ENCODE measurements at regions of chr7 and their contacts with region 1.

Region 1: DNA sequence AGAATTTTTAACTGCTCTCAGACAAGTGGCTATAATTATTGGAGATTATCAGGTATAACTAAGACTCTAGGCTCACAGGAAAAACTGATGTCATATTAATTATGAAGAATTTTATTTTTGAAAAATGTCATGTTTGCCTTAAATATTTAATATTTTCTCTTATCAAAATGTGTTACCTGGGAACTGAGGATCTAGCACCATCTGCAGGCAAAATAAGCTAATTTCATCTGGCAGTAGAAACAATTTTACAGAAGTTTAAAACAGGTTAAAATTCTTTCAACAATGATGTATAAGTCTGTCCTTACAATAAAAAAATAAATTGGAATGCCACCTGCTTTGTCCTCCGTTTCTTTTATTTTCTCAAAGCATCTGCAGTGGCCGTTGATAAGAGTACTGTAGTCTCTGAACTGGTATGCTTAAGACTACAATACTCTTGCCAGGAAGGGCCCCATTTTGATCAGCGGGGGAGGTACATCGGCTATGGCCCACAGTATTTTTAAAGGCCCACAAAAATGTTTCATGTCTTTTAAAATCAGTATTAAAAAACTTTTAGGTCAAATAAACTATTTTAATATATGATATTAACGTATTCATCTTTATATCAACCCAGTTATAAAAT is 81.3 kb downstream of the VWDE start:
- H3K4me3 Mint-ChIP-seq: no peak overlapping the region
- H3K27ac Mint-ChIP-seq: no peak overlapping the region
- H3K4me1 Mint-ChIP-seq: no peaks in the 10 kb centered on the region
- H3K27me3 Mint-ChIP-seq: peaks cover 4% of the 10 kb centered on the region

Region 2: GRCh38 chr7:11831736-11832495 is 490.5 kb before region 1 on chr7 and contains the start of gene THSD7A:
- intact Hi-C with region 1: loop called (anchors 10 kb)
- H3K4me3 Mint-ChIP-seq: peak within 1 kb of the TSS; percentile 72
- H3K27ac Mint-ChIP-seq: no peak within 1 kb of the TSS
- H3K4me1 Mint-ChIP-seq: peaks cover 15% of the 10 kb centered on the region
- H3K27me3 Mint-ChIP-seq: peaks cover 29% of the 10 kb centered on the region

Region 3: GRCh38 chr7:12067141-12067831 is 255.1 kb before region 1 on chr7:
- intact Hi-C with region 1: loop called (anchors 2 kb)
- H3K4me3 Mint-ChIP-seq: no peak overlapping the region
- H3K27ac Mint-ChIP-seq: peak overlapping the region; percentile 51
- H3K4me1 Mint-ChIP-seq: peaks cover 20% of the 10 kb centered on the region
- H3K27me3 Mint-ChIP-seq: no peaks in the 10 kb centered on the region

Region 4: DNA sequence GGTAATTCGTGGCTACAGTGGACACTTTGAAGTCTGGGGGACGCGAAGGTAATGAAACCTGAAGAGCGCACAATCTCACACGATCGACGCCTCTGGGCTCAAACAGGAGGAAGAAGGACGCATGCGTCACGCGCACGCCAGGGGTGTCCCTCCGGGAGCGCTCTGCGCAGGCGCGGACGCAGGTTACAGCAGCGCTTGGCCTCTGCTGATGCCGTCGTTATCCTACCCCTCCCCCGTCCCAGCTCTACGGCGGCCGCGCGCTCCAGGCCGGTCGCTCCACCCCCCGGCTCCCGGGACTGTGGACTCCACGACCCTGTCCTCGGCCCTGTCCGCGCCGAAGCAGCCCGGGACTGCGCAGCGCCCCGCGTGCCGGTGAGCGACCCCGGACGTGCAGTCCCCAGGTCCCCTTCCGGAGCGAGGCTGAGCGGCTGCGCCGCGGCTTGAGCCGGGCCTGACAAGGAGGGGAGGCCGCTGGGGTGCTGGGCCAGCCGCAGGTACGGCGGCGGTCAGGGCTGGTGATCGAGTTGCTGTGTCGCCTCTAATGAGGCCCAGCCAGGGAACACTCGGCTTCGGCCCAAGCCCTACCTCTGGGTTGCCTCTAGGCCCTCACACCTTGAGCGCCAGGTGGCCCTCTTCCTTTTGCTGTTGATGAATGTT is 111.2 kb before region 1 on chr7 and contains the start of gene TMEM106B:
- intact Hi-C with region 1: no loop called
- H3K4me3 Mint-ChIP-seq: peak within 1 kb of the TSS; percentile 84
- H3K27ac Mint-ChIP-seq: peak within 1 kb of the TSS; percentile 92
- H3K4me1 Mint-ChIP-seq: peaks cover 18% of the 10 kb centered on the region
- H3K27me3 Mint-ChIP-seq: peaks cover 27% of the 10 kb centered on the region

Measured in dendritic cell treated with granulocyte-macrophage colony-stimulating factor and Interleukin-4, amounts not matched to agents 40 ng/mL and 50 ng/mL, for 4 days (primary cell).